Vagina (tissue), 2 donors: ENCODE measurements at regions of chr1 and their contacts with region 1.

Region 1: DNA sequence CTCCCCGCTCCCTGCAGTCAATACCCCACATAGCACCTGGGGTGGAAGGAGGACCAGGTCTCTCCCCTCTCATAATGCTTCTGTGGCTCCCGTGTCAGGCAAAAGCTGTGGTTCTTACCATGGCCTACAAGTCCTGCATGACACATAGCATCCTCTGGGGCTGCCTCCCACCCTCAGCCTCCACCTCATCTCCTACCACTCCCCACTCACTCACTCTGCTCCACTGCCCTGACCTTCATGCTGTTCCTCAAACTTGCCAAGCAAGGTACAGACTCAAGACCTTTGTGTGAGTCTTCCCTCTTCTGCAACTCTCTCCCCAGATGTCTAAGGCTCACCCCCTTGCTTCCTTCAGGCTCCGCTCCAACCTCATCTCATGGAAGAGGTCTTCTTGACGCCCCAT is 28.0 kb upstream of the VANGL1 start:
- DNase-seq: no peak
- H3K4me3 ChIP-seq: no peak overlapping the region
- H3K27ac ChIP-seq: no peak overlapping the region
- H3K4me1 ChIP-seq: no peaks in the 10 kb centered on the region
- H3K27me3 ChIP-seq: no peaks in the 10 kb centered on the region
- CTCF ChIP-seq: no peak
- POLR2A ChIP-seq: no peak

Region 2: GRCh38 chr1:115275212-115275611 is 338.6 kb before region 1 on chr1:
- intact Hi-C with region 1: no loop called
- DNase-seq: no peak
- H3K4me3 ChIP-seq: no peak overlapping the region
- H3K27ac ChIP-seq: no peak overlapping the region
- H3K4me1 ChIP-seq: peaks cover 8% of the 10 kb centered on the region
- H3K27me3 ChIP-seq: no peaks in the 10 kb centered on the region
- CTCF ChIP-seq: no peak
- POLR2A ChIP-seq: no peak

Region 3: GRCh38 chr1:115507901-115508300 is 105.9 kb before region 1 on chr1:
- intact Hi-C with region 1: no loop called
- DNase-seq: no peak
- H3K4me3 ChIP-seq: no peak overlapping the region
- H3K27ac ChIP-seq: no peak overlapping the region
- H3K4me1 ChIP-seq: no peaks in the 10 kb centered on the region
- H3K27me3 ChIP-seq: no peaks in the 10 kb centered on the region
- CTCF ChIP-seq: no peak
- POLR2A ChIP-seq: no peak

Region 4: GRCh38 chr1:115577513-115577912 is 36.3 kb before region 1 on chr1:
- intact Hi-C with region 1: no loop called
- DNase-seq: no peak
- H3K4me3 ChIP-seq: no peak overlapping the region
- H3K27ac ChIP-seq: no peak overlapping the region
- H3K4me1 ChIP-seq: no peaks in the 10 kb centered on the region
- H3K27me3 ChIP-seq: no peaks in the 10 kb centered on the region
- CTCF ChIP-seq: no peak
- POLR2A ChIP-seq: no peak

Region 5: DNA sequence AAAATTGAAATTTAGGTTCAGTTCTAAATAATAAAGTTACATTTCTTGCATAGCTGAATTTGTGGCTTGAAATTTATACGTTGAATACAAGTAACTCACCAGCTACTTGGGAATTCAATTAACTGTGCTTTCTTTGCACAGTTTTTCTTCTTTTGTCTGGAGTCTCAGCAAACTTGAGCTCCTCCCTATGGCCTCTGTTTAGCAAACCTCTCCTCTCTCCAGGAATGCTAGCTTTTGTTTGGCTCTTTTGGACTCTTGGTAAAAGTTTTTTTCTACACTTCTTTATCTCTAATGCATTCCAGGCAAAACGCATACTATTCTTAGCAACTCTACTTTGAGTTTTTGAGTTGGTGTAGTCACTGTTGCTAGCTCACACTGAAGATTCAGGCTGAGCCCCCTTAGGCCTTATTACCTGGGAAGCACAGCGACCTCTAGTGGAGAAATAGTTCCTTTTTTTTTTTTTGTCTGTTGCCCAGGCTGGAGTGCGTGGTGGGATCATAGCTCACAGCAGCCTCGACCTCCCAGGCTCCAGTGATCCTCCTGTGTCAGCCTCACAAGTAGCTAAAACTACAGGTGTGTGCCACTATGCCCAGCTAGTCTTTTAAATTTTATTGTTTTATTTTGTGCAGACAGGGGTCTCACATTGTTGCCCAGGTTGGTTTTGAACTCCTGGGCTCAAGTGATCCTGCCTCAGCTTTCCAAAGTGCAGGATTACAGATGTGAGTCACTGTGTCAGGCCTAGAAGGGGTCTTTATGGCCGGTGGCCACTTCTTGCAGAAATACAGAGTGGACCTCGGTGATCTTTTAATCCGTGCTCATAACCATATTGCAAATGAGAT is 93.0 kb after region 1 on chr1:
- intact Hi-C with region 1: loop called (anchors 10 kb)
- DNase-seq: no peak
- H3K4me3 ChIP-seq: no peak overlapping the region
- H3K27ac ChIP-seq: no peak overlapping the region
- H3K4me1 ChIP-seq: peaks cover 20% of the 10 kb centered on the region
- H3K27me3 ChIP-seq: no peaks in the 10 kb centered on the region
- CTCF ChIP-seq: peak; percentile 27 to 36 (median 32)
- POLR2A ChIP-seq: no peak

Region 6: GRCh38 chr1:116067566-116067890 is 453.8 kb after region 1 on chr1:
- intact Hi-C with region 1: no loop called
- DNase-seq: no peak
- H3K4me3 ChIP-seq: no peak overlapping the region
- H3K27ac ChIP-seq: peak overlapping the region; percentile 74
- H3K4me1 ChIP-seq: peaks cover 15% of the 10 kb centered on the region
- H3K27me3 ChIP-seq: no peaks in the 10 kb centered on the region
- CTCF ChIP-seq: no peak
- POLR2A ChIP-seq: no peak